ENCODE measurements at regions of chr3 and their contacts with region 1.

Region 1: DNA sequence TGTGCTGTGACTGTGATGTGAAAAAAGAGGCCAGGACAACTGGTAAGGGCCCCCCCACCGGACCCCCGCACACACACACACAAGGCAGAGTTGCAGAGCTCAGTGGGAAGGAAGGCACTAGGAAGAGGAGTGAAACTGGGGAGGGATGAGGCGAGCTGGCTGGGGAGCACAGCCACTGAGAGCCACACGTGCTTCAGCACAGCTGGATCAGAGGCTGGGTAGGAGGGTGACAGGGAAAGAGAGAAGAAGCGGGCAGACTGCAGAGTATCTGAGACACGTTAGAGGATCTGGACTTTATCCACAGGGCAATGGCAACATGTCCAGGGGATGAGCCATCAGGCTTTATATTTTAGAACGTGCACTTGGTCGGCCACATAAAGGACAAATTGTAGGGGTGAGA is 38.0 kb upstream of the TKT start:
- DNase-seq: no peak
- ATAC-seq: no peak

Region 2: DNA sequence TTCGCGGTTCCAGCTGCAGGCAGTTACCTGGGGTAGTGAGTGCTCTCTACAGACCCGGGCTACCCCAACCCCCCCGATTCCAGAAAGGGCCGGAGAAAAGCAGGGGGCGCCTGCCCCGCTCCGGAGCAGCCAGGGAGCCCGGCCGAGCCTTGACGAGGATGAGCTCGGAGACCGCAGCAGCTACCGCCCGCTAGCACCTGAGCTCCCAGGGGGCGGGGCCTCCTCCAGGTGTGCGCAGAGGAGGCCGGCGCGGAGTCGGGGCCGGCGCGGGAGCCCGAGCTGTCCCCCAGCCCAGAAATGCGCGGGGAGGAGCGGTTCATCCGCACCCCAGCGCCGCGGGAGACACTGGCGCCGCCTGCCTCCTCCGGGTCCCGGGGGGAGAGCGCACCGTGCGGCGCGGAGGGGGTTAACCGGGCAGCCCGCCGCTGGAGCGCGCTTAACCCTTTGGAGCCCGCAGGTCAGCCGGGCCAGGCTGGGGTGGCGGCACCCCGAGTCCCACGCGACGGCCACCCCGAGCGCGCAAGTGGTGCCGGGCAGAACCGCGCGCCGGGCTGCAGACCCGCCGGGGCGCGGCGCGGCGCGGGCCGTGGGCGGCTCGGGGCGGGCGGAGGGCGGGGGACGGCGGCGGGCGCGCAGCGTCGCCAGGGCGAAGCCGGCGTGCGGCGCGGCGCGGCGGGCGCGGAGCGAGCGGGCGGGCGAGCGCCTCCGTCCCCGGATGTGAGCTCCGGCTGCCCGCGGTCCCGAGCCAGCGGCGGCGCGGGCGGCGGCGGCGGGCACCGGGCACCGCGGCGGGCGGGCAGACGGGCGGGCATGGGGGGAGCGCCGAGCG is 200.3 kb after region 1 on chr3 and contains the start of gene CACNA1D:
- intact Hi-C with region 1: loop called (anchors 10 kb)
- DNase-seq: no peak
- ATAC-seq: no peak
- total RNA-seq, gene CACNA1D: 1.1 TPM